PC-3 (cell line): ENCODE measurements at regions of chr10 and their contacts with region 1.

Region 1: DNA sequence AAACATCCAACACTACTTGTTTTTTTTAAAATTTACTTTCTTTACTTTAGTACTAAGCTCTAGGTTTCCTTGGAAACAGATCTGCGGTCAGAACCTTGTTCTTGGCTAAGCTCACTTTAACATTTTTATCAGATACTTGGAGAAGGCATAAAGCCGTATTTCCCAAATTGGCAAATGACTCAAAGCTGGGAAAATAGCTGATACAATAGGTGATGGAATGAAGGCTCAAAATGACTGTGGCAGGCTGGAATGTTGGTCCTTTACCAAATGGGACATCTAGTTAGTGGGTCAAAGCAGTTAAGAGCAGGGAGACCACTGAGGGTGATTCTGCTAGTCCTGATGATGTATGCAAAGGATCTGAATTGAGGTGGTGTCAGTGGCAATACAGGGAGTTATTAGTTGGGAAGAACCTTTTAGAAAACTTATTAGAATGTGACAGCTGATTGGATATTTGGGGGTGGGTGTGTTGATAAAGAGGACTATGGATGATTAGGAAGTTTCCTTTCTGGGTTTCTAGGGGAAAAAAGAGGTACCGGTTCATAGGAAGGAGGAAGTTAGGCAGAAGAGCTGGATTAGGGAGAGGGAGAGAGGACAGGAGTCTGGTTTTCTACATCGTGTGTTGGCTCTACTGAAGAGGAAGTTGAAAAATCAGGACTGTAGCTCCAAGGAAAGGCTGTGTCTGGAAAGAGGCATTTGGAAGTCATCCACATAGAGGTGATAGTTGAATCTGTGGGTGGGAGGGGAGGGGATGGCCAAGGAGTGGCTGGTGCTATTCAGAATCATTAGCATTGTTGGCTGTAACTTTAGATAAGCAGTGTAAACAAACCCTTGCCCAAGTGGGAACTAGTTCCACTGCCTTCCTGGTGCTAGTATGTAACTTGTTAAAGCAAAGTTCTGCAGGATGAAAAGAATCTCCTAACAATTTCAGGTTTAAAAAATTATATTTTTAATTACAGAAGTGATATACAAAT is 13.1 kb downstream of the PLCE1 start:
- DNase-seq: peak; percentile 94
- ATAC-seq: peak; percentile 71
- H3K4me3 ChIP-seq: peak overlapping the region; percentile 62
- H3K27ac ChIP-seq: peak overlapping the region; percentile 93
- H3K4me1 ChIP-seq: peaks cover 60% of the 10 kb centered on the region
- H3K27me3 ChIP-seq: no peaks in the 10 kb centered on the region
- CTCF ChIP-seq: no peak

Region 2: GRCh38 chr10:93015722-93016121 is 991.2 kb before region 1 on chr10:
- CTCF ChIA-PET with region 1: no interaction called
- POLR2A ChIA-PET with region 1: no interaction called
- intact Hi-C with region 1: no loop called
- DNase-seq: no peak
- ATAC-seq: no peak
- H3K4me3 ChIP-seq: no peak overlapping the region
- H3K27ac ChIP-seq: no peak overlapping the region
- H3K4me1 ChIP-seq: no peaks in the 10 kb centered on the region
- H3K27me3 ChIP-seq: no peaks in the 10 kb centered on the region
- CTCF ChIP-seq: no peak

Region 3: DNA sequence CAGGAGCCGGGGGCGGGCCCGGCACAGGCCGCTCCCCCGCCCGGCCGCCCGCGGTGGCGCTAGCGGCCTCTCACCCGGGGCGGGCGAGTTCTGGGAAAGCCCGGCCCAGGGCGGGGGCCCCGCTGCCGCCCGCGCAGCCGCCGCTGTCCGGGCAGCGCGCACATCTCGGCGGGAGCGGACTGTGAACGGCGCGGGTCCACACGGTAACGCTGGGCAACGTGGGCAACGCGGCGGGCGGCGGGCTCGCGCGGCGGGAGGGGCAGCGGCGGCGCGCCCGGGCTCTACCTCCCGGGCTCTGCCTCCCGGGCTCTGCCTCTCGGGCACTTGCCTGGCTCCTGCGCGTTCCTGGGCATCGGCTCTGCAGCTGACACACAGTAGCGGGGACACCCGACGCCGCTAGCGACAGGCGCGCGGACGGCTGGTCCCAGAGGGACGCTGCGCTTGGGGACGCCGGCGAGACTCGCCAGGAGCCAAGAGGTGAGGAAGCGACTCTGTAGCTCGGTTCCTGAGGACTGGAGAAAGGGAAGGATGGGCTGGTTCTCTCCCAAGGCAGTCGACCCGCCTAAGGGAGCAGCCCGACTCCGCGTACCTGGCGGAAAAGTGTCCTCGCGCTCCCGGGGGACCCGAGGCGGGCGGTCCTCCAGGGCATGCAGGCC is 13.0 kb before region 1 on chr10 and contains the start of gene PLCE1:
- CTCF ChIA-PET with region 1: no interaction called
- POLR2A ChIA-PET with region 1: no interaction called
- intact Hi-C with region 1: loop called (anchors 1 kb)
- DNase-seq: peak; percentile 69
- ATAC-seq: peak; percentile 66
- H3K4me3 ChIP-seq: peak within 1 kb of the TSS; percentile 88
- H3K27ac ChIP-seq: peak within 1 kb of the TSS; percentile 13
- H3K4me1 ChIP-seq: peaks cover 48% of the 10 kb centered on the region
- H3K27me3 ChIP-seq: no peaks in the 10 kb centered on the region
- CTCF ChIP-seq: no peak
- total RNA-seq, gene PLCE1: 9.2 and 11.4 TPM in 2 replicates

Region 4: DNA sequence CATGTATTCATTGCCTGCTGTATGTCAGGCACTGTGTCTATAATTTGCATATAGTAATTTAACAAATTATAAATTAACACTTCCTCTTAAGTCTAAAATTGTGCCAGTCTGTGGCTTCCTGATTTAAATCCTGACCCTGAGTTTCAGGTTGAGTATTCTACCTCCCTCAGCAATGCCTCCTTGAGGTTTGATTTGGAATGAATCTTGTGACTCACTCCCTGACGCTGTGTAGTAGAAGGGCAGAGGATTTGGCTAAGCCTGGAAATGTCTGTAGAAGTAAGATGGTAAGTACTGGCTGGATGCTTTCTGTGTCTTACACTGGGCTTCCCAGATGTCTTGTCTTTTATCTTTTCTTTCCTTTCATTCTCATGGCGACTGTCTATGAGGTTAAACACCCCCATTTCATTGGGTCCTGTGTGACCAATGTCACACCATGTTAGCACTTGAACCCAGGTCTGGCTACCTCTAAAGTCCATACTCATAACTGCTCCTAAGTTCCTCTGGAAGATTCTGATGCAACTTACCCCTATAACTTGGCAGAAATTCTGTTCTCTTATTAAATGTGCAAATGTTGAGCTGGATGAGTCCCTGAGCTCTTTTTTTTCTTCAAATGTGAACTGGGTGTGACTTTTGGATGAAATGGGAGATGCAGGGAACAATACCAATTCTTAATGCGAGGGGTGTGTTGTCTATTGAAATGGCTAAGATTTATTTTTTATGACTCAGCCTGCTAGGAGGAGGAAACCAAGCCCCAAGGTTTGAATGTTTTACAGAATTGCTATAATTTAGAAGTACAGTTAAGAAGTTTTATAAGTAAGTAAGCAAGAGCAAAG is 35.3 kb after region 1 on chr10:
- CTCF ChIA-PET with region 1: interaction called, 6 read pairs
- POLR2A ChIA-PET with region 1: interaction called, 5 read pairs
- intact Hi-C with region 1: loop called (anchors 1 kb)
- DNase-seq: peak; percentile 86
- ATAC-seq: peak; percentile 78
- H3K4me3 ChIP-seq: peak overlapping the region; percentile 52
- H3K27ac ChIP-seq: peak overlapping the region; percentile 98
- H3K4me1 ChIP-seq: peaks cover 55% of the 10 kb centered on the region
- H3K27me3 ChIP-seq: no peaks in the 10 kb centered on the region
- CTCF ChIP-seq: peak; percentile 51

Region 5: GRCh38 chr10:94123258-94123995 is 116.6 kb after region 1 on chr10:
- CTCF ChIA-PET with region 1: no interaction called
- POLR2A ChIA-PET with region 1: no interaction called
- intact Hi-C with region 1: loop called (anchors 5 kb)
- DNase-seq: peak; percentile 90
- ATAC-seq: peak; percentile 94
- H3K4me3 ChIP-seq: peak overlapping the region; percentile 39; the same call in 1 of the 2 replicates
- H3K27ac ChIP-seq: peak overlapping the region; percentile 66
- H3K4me1 ChIP-seq: peaks cover 54% of the 10 kb centered on the region
- H3K27me3 ChIP-seq: no peaks in the 10 kb centered on the region
- CTCF ChIP-seq: no peak